HepG2 (cell line): ENCODE measurements at regions of chr15 and their contacts with region 1.

Region 1: GRCh38 chr15:75903331-75904239 is at the start of gene FBXO22:
- DNase-seq: peak; percentile 82
- ATAC-seq: peak; percentile 96
- H3K4me3 ChIP-seq: peak within 1 kb of the TSS; percentile 92 to 99 (median 97)
- H3K27ac ChIP-seq: peak within 1 kb of the TSS; percentile 89
- H3K4me1 ChIP-seq: peaks cover 43% of the 10 kb centered on the region
- H3K27me3 ChIP-seq: no peaks in the 10 kb centered on the region; a peak in 1 of 5 replicates
- CTCF ChIP-seq: no peak
- EP300 ChIP-seq: no peak
- POLR2A ChIP-seq: peak; percentile 88 to 89
- RAD21 ChIP-seq: peak; percentile 53; the same call in 1 of the 2 replicates
- total RNA-seq, gene FBXO22: 112 and 179 TPM in 2 replicates

Region 2: DNA sequence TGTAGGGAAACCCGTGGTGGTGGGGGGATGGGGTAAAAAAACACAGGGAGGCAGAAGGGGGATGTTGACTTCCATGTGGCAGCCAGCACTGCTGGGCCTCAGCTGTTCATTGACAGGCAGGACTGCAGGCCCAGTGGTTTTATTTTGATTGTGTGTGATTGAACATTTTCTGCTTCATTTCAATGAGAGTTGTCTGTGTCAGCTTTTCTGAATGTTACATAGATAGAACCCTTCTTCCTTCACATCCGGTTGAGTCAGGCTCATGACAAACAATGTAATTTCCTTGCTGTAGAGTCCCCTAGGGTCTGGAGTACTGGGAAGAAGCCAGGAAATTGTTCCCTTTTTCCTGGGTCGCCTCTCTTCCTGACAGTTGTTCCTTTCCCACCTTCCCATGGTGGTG is 938.8 kb before region 1 on chr15:
- CTCF ChIA-PET with region 1: no interaction called
- POLR2A ChIA-PET with region 1: no interaction called
- in situ Hi-C with region 1: no loop called
- intact Hi-C with region 1: no loop called
- DNase-seq: no peak
- ATAC-seq: no peak
- H3K4me3 ChIP-seq: no peak overlapping the region
- H3K27ac ChIP-seq: no peak overlapping the region
- H3K4me1 ChIP-seq: peaks cover 9% of the 10 kb centered on the region; the same call in 1 of the 2 replicates
- H3K27me3 ChIP-seq: peaks cover 3 to 31% of the 10 kb centered on the region in 2 experiments; a peak in 4 of 5 replicates
- CTCF ChIP-seq: no peak
- EP300 ChIP-seq: no peak
- POLR2A ChIP-seq: no peak
- RAD21 ChIP-seq: no peak

Region 3: GRCh38 chr15:75842722-75843551 is 60.6 kb before region 1 on chr15 and contains the start of gene UBE2Q2:
- CTCF ChIA-PET with region 1: no interaction called
- POLR2A ChIA-PET with region 1: interaction called, 8 read pairs
- in situ Hi-C with region 1: no loop called
- intact Hi-C with region 1: loop called (anchors 10 kb)
- DNase-seq: peak; percentile 44
- ATAC-seq: peak; percentile 83
- H3K4me3 ChIP-seq: peak within 1 kb of the TSS; percentile 69 to 85 (median 83)
- H3K27ac ChIP-seq: peak within 1 kb of the TSS; percentile 59
- H3K4me1 ChIP-seq: peaks cover 45% of the 10 kb centered on the region
- H3K27me3 ChIP-seq: peaks cover 4 to 14% of the 10 kb centered on the region in 2 experiments; a peak in 3 of 5 replicates
- CTCF ChIP-seq: no peak
- EP300 ChIP-seq: no peak
- POLR2A ChIP-seq: peak; percentile 19 to 35; a peak in 3 of 4 replicates
- RAD21 ChIP-seq: no peak; the same call in 1 of the 2 replicates
- total RNA-seq, gene UBE2Q2: 20.1 and 20.4 TPM in 2 replicates

Region 4: GRCh38 chr15:75884041-75884440 is 19.5 kb before region 1 on chr15:
- CTCF ChIA-PET with region 1: no interaction called
- POLR2A ChIA-PET with region 1: interaction called, 4 read pairs
- in situ Hi-C with region 1: no loop called
- intact Hi-C with region 1: loop called (anchors 2 kb)
- DNase-seq: no peak
- ATAC-seq: no peak
- H3K4me3 ChIP-seq: no peak overlapping the region
- H3K27ac ChIP-seq: no peak overlapping the region
- H3K4me1 ChIP-seq: peaks cover 37% of the 10 kb centered on the region
- H3K27me3 ChIP-seq: no peaks in the 10 kb centered on the region
- CTCF ChIP-seq: no peak
- EP300 ChIP-seq: no peak
- POLR2A ChIP-seq: no peak
- RAD21 ChIP-seq: no peak